Left colon (tissue), 2 donors: ENCODE measurements at regions of chr11 and their contacts with region 1.

Region 1: DNA sequence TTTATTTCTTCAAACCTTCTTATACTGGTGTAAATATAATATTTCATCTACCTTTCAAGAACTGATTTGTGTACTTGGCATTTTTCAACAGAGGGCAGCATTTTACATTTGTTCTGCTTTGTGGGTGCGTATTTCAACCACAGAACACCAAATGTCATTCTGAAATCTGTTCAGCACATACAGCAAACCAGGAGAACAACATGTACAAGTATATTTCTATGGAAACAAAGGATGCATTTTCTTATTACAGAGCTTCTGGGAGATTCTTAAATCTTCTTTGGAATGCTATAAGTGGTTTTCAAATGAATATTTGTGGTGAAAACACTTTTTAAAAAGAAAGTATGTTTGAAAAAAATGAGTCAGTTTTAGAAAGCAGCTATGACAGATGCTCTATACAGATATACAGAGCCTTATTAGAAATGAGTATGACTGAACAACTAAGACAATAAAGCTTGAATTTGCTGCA is 946.0 kb downstream of the FAM181B start:
- DNase-seq: no peak
- ATAC-seq: no peak

Region 2: DNA sequence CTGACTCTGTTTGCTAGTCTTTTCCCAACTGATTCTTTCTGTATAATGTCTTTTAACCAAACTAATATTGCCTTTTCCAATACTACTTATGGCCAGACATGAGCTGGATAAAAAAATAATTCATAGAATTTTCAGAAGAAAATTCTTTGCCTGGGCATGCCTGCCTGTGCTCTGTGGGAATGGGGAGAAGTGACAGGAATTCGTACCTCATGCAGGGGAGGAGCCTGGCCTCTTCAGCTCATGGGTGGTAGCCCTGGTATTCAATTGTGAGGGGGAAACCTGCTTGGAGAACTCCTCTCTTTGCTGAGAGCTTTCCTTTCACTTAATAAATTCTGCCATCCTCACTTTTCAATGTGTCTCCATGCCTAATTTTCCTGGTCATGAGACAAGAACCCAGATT is 17.2 kb after region 1 on chr11:
- intact Hi-C with region 1: loop called in 1 of 2 experiments (anchors 2 kb)
- DNase-seq: no peak
- ATAC-seq: no peak